ENCODE measurements at regions of chr9 and their contacts with region 1.

Region 1: DNA sequence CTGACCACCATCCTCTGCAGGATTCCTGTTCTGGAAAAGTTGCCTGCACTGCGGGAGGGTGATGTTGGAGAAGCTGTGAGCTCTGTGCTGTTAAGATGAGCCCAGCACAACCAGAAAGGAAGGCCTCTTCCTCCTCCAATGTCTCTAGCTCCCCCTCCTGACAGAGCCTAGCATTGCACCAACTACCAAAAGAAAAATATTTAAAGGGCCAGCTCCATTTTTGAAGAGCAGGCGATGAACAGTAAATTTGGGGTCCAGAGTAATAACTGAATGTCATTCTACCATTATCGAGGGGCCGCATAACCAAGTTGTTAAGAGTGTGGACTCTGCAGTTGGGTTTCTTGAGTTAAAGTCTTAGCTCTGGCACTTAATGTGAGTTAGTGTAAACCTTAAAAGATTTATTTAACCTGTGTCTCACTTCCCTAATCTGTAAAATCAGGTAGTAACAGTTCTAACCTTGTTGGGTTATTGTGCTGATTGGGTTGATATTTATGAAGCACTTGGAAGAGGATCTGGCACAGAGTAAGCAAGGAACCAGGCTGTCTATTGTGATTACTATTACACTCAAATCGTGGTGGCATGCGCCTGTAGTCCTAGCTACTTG is 3.9 kb downstream of the TEX53 start:
- DNase-seq: peak; percentile 83
- H3K4me3 ChIP-seq: no peak overlapping the region
- H3K27ac ChIP-seq: no peak overlapping the region
- H3K4me1 ChIP-seq: peaks cover 24% of the 10 kb centered on the region
- CTCF ChIP-seq: peak; percentile 97

Region 2: GRCh38 chr9:114378883-114379282 is 274.8 kb before region 1 on chr9:
- CTCF ChIA-PET with region 1: interaction called, 10 read pairs
- POLR2A ChIA-PET with region 1: no interaction called
- intact Hi-C with region 1: no loop called
- DNase-seq: no peak
- H3K4me3 ChIP-seq: no peak overlapping the region
- H3K27ac ChIP-seq: peak overlapping the region; percentile 7
- H3K4me1 ChIP-seq: peaks cover 79% of the 10 kb centered on the region
- CTCF ChIP-seq: peak; percentile 35; the same call in 1 of the 2 replicates

Region 3: DNA sequence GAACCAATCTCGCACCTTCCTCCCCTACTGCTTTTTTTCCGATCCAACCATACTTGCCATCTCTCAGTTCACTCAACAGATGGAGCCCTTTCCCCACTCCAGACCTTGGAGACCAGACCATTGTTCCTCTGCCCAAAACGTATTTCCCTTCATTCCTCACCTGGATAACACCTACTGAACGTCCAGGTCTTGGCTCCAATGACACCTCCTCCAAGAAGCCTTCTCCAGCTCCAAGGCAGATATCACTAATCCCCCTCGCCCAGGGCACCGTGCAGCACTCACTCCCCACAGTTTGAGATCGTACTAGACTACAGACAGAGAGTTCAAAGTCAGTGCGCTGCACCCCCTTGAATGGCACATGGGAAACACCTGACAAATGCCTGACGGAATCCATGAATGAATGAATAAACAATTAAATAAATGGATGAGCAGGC is 218.8 kb before region 1 on chr9:
- CTCF ChIA-PET with region 1: interaction called, 3 read pairs
- POLR2A ChIA-PET with region 1: no interaction called
- intact Hi-C with region 1: loop called (anchors 2 kb)
- DNase-seq: peak; percentile 57
- H3K4me3 ChIP-seq: no peak overlapping the region
- H3K27ac ChIP-seq: no peak overlapping the region
- H3K4me1 ChIP-seq: peaks cover 9% of the 10 kb centered on the region
- CTCF ChIP-seq: peak; percentile 78

Region 4: GRCh38 chr9:114487607-114488300 is 165.9 kb before region 1 on chr9:
- CTCF ChIA-PET with region 1: interaction called, 4 read pairs
- POLR2A ChIA-PET with region 1: no interaction called
- intact Hi-C with region 1: loop called (anchors 1 kb)
- DNase-seq: peak; percentile 77
- H3K4me3 ChIP-seq: no peak overlapping the region
- H3K27ac ChIP-seq: no peak overlapping the region
- H3K4me1 ChIP-seq: no peaks in the 10 kb centered on the region
- CTCF ChIP-seq: peak; percentile 93

Region 5: GRCh38 chr9:114538241-114538640 is 115.4 kb before region 1 on chr9:
- CTCF ChIA-PET with region 1: interaction called, 27 read pairs
- POLR2A ChIA-PET with region 1: interaction called, 10 read pairs
- intact Hi-C with region 1: loop called (anchors 1 kb)
- DNase-seq: peak; percentile 84
- H3K4me3 ChIP-seq: no peak overlapping the region
- H3K27ac ChIP-seq: no peak overlapping the region
- H3K4me1 ChIP-seq: peaks cover 26% of the 10 kb centered on the region
- CTCF ChIP-seq: peak; percentile 84

Region 6: DNA sequence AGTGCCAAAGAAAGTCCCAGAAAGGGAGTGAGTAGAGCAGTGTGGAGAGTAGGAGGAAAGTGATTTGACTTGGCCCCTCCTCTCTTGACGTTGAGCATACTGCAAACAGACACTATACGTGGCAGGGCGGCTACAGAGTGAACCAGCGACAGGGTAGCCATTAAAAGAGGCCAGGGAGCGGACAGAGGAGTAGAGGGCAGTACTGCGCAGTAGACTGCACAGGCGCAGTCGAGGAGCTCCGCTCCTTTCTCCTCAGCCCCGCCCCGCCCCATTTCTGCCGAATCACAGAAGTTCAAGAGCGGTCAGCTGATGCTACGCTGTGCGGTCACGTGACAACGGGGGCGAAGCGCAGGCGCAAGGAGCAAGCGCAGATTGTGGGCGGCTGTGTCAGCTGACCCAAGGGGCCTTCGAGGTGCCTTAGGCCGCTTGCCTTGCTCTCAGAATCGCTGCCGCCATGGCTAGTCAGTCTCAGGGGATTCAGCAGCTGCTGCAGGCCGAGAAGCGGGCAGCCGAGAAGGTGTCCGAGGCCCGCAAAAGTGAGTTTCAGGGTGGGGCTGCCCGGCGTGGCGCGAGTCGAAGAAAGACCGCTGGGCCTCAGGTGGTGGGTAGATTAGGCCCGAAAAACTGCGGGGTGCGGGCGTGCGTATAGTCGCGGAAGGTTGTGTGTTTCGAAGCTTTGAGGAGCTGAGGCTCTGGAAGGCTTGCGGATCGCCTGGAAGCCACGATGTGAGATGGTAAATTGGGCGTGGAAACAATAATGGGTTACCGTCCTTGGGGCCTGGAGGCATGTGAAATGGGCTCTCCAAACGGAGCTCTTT is 66.1 kb before region 1 on chr9 and contains the start of gene ATP6V1G1:
- CTCF ChIA-PET with region 1: interaction called, 22 read pairs
- POLR2A ChIA-PET with region 1: interaction called, 6 read pairs
- intact Hi-C with region 1: loop called (anchors 1 kb)
- DNase-seq: peak; percentile 99
- H3K4me3 ChIP-seq: peak within 1 kb of the TSS; percentile 84
- H3K27ac ChIP-seq: peak within 1 kb of the TSS; percentile 48
- H3K4me1 ChIP-seq: peaks cover 59% of the 10 kb centered on the region
- CTCF ChIP-seq: peak; percentile 47; the same call in 1 of the 2 replicates
- total RNA-seq, gene ATP6V1G1: 117 and 164 TPM in 2 replicates

Region 7: GRCh38 chr9:114611516-114612271 is 42.0 kb before region 1 on chr9:
- CTCF ChIA-PET with region 1: interaction called, 7 read pairs
- POLR2A ChIA-PET with region 1: interaction called, 3 read pairs
- intact Hi-C with region 1: loop called (anchors 5 kb)
- DNase-seq: peak; percentile 62
- H3K4me3 ChIP-seq: peak overlapping the region; percentile 95
- H3K27ac ChIP-seq: peak overlapping the region; percentile 86
- H3K4me1 ChIP-seq: peaks cover 72% of the 10 kb centered on the region
- CTCF ChIP-seq: no peak